PC-3 (cell line): ENCODE measurements at regions of chr4 and their contacts with region 1.

Region 1: GRCh38 chr4:76283900-76284299 is 22.6 kb upstream of the STBD1 start:
- DNase-seq: peak; percentile 36
- ATAC-seq: peak; percentile 34
- H3K4me3 ChIP-seq: no peak overlapping the region
- H3K27ac ChIP-seq: peak overlapping the region; percentile 48
- H3K4me1 ChIP-seq: peaks cover 14% of the 10 kb centered on the region
- H3K27me3 ChIP-seq: no peaks in the 10 kb centered on the region
- CTCF ChIP-seq: no peak

Region 2: DNA sequence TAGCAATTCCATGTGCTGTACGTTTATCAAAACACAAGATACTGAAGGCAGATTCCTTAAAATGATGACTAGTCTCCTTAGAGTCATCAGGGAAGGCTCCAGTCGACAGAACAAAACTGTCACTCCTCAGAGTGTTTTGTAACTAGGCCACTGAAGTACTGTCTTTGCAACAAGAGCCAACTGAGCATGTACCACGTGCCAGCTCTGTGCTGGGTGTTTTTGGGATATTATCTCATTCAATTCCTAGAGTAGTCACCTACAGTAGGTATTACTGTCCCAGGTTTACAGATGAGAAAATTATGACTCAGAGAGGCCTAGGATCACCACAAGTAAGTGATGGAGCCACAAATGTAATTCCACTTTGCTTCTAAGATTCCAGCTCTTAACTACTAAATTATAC is 117.4 kb before region 1 on chr4:
- CTCF ChIA-PET with region 1: no interaction called
- POLR2A ChIA-PET with region 1: no interaction called
- intact Hi-C with region 1: no loop called
- DNase-seq: no peak
- ATAC-seq: no peak
- H3K4me3 ChIP-seq: no peak overlapping the region
- H3K27ac ChIP-seq: no peak overlapping the region
- H3K4me1 ChIP-seq: no peaks in the 10 kb centered on the region
- H3K27me3 ChIP-seq: no peaks in the 10 kb centered on the region
- CTCF ChIP-seq: no peak

Region 3: DNA sequence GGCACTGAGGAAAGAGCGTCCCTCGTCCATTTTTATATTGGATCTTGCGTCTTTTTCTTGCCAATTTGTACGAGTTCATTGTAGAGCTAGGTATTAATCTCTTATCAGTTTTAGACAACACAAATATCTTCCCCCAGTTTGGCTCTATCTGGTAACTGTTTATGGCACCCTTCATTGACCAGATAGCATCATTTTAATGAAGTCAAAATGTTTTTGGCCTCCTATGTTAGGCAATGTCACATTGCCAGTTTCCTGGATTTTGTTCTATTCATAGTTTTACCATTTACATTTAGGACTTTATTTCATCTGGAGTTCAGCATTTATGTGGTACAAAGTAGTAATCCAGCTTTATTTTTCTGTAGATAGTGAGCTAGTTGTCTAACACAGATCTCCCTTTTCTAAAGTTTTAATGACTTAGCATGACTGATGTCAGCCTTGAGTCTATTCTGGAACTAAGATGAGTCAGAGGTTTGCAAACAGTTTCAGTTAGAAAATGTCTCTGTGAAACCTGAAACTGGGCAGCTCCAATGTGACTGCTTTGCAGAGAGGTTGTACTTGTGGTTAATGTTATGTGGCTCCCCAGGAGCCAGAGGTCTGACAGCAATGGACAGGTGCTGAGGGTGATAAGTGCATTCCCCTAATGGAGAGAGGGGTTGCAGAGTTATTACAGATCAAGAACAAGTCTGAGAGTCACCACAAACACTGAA is 17.3 kb after region 1 on chr4:
- CTCF ChIA-PET with region 1: interaction called, 4 read pairs
- POLR2A ChIA-PET with region 1: no interaction called
- intact Hi-C with region 1: loop called (anchors 1 kb)
- DNase-seq: peak; percentile 88
- ATAC-seq: peak; percentile 80
- H3K4me3 ChIP-seq: no peak overlapping the region
- H3K27ac ChIP-seq: peak overlapping the region; percentile 79
- H3K4me1 ChIP-seq: peaks cover 34% of the 10 kb centered on the region
- H3K27me3 ChIP-seq: no peaks in the 10 kb centered on the region
- CTCF ChIP-seq: no peak